B cell (primary cell): ENCODE measurements at regions of chr15 and their contacts with region 1.

Region 1: GRCh38 chr15:64905119-64905831 is 6.4 kb upstream of the ANKDD1A start:
- DNase-seq: peak; percentile 85
- ATAC-seq: peak; percentile 95
- H3K4me3 ChIP-seq: peak overlapping the region; percentile 19 to 61 (median 44)
- H3K4me3 Mint-ChIP-seq: peak overlapping the region; percentile 84
- H3K27ac ChIP-seq: no peak overlapping the region
- H3K27ac Mint-ChIP-seq: peak overlapping the region; percentile 77
- H3K4me1 ChIP-seq: peaks cover 21 to 24% of the 10 kb centered on the region in 2 donors
- H3K4me1 Mint-ChIP-seq: peaks cover 36% of the 10 kb centered on the region
- H3K27me3 ChIP-seq: peaks cover 0 to 7% (median 0%) of the 10 kb centered on the region in 4 experiments
- H3K27me3 Mint-ChIP-seq: peaks cover 4% of the 10 kb centered on the region
- CTCF ChIP-seq: peak; percentile 86

Region 2: GRCh38 chr15:64841258-64842095 is 63.8 kb before region 1 on chr15 and contains the start of gene PLEKHO2:
- CTCF ChIA-PET with region 1: interaction called, 56 read pairs
- POLR2A ChIA-PET with region 1: interaction called, 4 read pairs
- intact Hi-C with region 1: no loop called
- DNase-seq: peak; percentile 90
- ATAC-seq: peak; percentile 76
- H3K4me3 ChIP-seq: peak within 1 kb of the TSS; percentile 67 to 88 (median 72)
- H3K4me3 Mint-ChIP-seq: peak within 1 kb of the TSS; percentile 91
- H3K27ac ChIP-seq: peak within 1 kb of the TSS; percentile 65 to 85
- H3K27ac Mint-ChIP-seq: peak within 1 kb of the TSS; percentile 84
- H3K4me1 ChIP-seq: peaks cover 45 to 53% of the 10 kb centered on the region in 2 donors
- H3K4me1 Mint-ChIP-seq: peaks cover 58% of the 10 kb centered on the region
- H3K27me3 ChIP-seq: no peaks in the 10 kb centered on the region
- H3K27me3 Mint-ChIP-seq: no peaks in the 10 kb centered on the region
- CTCF ChIP-seq: peak; percentile 53
- total RNA-seq, gene PLEKHO2: 23.1 and 25.4 TPM in 2 replicates

Region 3: GRCh38 chr15:64870353-64870752 is 34.9 kb before region 1 on chr15:
- CTCF ChIA-PET with region 1: no interaction called
- POLR2A ChIA-PET with region 1: no interaction called
- intact Hi-C with region 1: no loop called
- DNase-seq: no peak
- ATAC-seq: no peak
- H3K4me3 ChIP-seq: no peak overlapping the region
- H3K4me3 Mint-ChIP-seq: no peak overlapping the region
- H3K27ac ChIP-seq: no peak overlapping the region
- H3K27ac Mint-ChIP-seq: peak overlapping the region; percentile 50
- H3K4me1 ChIP-seq: peaks cover 0 to 11% of the 10 kb centered on the region in 2 donors
- H3K4me1 Mint-ChIP-seq: peaks cover 17% of the 10 kb centered on the region
- H3K27me3 ChIP-seq: no peaks in the 10 kb centered on the region
- H3K27me3 Mint-ChIP-seq: no peaks in the 10 kb centered on the region
- CTCF ChIP-seq: no peak

Region 4: GRCh38 chr15:64921711-64922110 is 16.4 kb after region 1 on chr15:
- CTCF ChIA-PET with region 1: no interaction called
- POLR2A ChIA-PET with region 1: no interaction called
- intact Hi-C with region 1: no loop called
- DNase-seq: no peak
- ATAC-seq: no peak
- H3K4me3 ChIP-seq: no peak overlapping the region
- H3K4me3 Mint-ChIP-seq: no peak overlapping the region
- H3K27ac ChIP-seq: no peak overlapping the region
- H3K27ac Mint-ChIP-seq: no peak overlapping the region
- H3K4me1 ChIP-seq: no peaks in the 10 kb centered on the region
- H3K4me1 Mint-ChIP-seq: peaks cover 3% of the 10 kb centered on the region
- H3K27me3 ChIP-seq: no peaks in the 10 kb centered on the region
- H3K27me3 Mint-ChIP-seq: no peaks in the 10 kb centered on the region
- CTCF ChIP-seq: no peak